ENCODE measurements at regions of chr20 and their contacts with region 1.

Region 1: GRCh38 chr20:49846206-49846807 is 33.7 kb downstream of the SLC9A8 start:
- DNase-seq: peak; percentile 76
- ATAC-seq: peak; percentile 85
- H3K4me3 Mint-ChIP-seq: no peak overlapping the region
- H3K27ac Mint-ChIP-seq: no peak overlapping the region
- H3K4me1 Mint-ChIP-seq: peaks cover 9% of the 10 kb centered on the region
- H3K27me3 Mint-ChIP-seq: no peaks in the 10 kb centered on the region

Region 2: DNA sequence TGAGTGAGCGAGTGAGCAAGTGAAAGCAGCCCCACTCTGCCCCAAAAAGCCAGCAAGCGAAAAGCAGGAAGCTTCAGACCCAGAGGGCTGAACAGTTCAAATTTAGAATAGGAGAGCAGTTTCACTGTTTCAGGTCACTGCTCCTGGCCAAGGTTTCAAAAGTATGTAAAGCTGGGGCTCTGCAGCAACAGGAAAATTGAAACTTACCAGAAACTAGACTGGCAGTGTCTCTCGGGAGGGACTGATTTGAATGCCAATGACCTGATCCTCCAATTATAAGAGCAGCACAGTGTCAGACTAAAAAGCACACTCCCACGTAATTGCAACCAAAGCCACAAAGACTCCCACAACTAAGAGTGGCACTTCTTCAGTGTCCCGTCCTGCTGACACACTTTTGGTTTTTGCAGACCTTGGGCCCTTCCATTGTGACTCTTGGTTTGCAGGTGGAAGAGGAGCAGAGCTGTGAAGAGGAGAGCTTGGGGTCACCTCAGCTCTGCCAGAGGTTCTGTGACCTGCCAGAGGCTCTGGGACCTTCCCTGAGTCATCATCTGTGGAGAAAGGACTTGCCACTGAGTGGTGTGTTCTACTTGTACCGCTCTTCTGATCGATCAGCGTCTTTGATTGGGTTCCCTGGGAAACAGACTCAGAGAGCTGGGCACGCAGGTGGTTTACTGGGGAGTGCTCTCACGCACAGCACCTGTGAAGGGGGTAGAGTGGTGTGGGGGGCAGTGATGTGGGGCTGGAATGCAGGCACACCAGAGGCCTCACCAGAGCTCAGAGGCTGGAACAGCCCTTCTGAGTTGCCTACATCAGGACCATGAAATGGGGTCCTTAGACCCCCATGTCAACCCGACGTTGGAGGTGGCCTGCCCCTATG is 225.7 kb before region 1 on chr20:
- CTCF ChIA-PET with region 1: interaction called, 155 read pairs
- POLR2A ChIA-PET with region 1: no interaction called
- DNase-seq: peak; percentile 43
- ATAC-seq: peak; percentile 81
- H3K4me3 Mint-ChIP-seq: no peak overlapping the region
- H3K27ac Mint-ChIP-seq: peak overlapping the region; percentile 18
- H3K4me1 Mint-ChIP-seq: peaks cover 3% of the 10 kb centered on the region
- H3K27me3 Mint-ChIP-seq: peaks cover 6% of the 10 kb centered on the region

Region 3: GRCh38 chr20:49668181-49668877 is 178.0 kb before region 1 on chr20:
- CTCF ChIA-PET with region 1: interaction called, 25 read pairs
- POLR2A ChIA-PET with region 1: no interaction called
- DNase-seq: peak; percentile 59
- ATAC-seq: peak; percentile 27
- H3K4me3 Mint-ChIP-seq: peak overlapping the region; percentile 57
- H3K27ac Mint-ChIP-seq: peak overlapping the region; percentile 80
- H3K4me1 Mint-ChIP-seq: peaks cover 46% of the 10 kb centered on the region
- H3K27me3 Mint-ChIP-seq: peaks cover 4% of the 10 kb centered on the region

Region 4: DNA sequence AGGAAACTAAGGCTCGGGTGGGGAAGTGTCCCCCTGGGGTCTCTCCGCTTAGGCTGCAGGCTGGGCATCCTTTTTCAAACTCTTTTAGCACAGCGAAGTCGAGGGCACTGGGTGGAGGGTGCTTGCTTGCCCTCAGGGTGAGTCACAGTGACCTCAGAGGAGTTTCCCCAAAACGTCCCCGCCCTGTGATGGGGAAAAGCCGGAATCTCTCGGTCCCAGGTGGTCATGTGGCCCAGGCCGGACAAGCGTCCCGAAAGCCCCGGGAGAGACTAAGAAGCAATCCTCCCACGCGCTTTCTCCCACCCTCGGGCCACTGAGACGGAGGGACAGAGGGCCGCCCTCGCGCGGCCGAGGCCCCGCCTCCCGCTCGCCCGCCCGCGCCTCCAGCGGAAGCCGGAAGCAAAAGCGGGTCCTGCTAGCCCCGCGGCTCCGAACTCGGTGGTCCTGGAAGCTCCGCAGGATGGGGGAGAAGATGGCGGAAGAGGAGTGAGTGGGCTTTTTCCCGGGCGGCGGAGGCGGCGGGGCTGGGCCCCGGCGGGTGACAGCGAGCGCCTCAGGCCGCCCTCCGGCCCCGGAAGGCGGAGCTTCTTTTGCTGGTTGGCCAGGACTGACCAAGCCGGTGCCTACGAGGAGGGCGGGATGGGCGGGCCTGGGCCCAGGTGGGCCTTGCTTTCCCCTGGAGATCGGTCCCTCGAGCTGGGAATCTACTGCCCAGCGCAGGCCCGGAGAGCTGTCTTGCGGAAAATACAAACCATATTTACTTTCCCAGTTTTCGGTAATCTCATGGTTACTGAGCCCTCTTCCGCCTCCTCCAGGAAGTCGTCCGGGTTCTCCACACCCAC is 33.6 kb before region 1 on chr20 and contains the start of gene SLC9A8:
- CTCF ChIA-PET with region 1: interaction called, 13 read pairs
- POLR2A ChIA-PET with region 1: interaction called, 3 read pairs
- DNase-seq: peak; percentile 87
- ATAC-seq: peak; percentile 95
- H3K4me3 Mint-ChIP-seq: peak within 1 kb of the TSS; percentile 97
- H3K27ac Mint-ChIP-seq: peak within 1 kb of the TSS; percentile 95
- H3K4me1 Mint-ChIP-seq: peaks cover 34% of the 10 kb centered on the region
- H3K27me3 Mint-ChIP-seq: no peaks in the 10 kb centered on the region
- total RNA-seq, gene SLC9A8: 19.4 to 20.5 TPM

Region 5: GRCh38 chr20:49896204-49896979 is 50.1 kb after region 1 on chr20:
- CTCF ChIA-PET with region 1: no interaction called
- POLR2A ChIA-PET with region 1: no interaction called
- DNase-seq: no peak
- ATAC-seq: no peak
- H3K4me3 Mint-ChIP-seq: no peak overlapping the region
- H3K27ac Mint-ChIP-seq: no peak overlapping the region
- H3K4me1 Mint-ChIP-seq: peaks cover 22% of the 10 kb centered on the region
- H3K27me3 Mint-ChIP-seq: no peaks in the 10 kb centered on the region

Region 6: GRCh38 chr20:49989234-49990065 is 143.1 kb after region 1 on chr20:
- CTCF ChIA-PET with region 1: no interaction called
- POLR2A ChIA-PET with region 1: no interaction called
- DNase-seq: no peak
- ATAC-seq: no peak
- H3K4me3 Mint-ChIP-seq: no peak overlapping the region
- H3K27ac Mint-ChIP-seq: no peak overlapping the region
- H3K4me1 Mint-ChIP-seq: peaks cover 12% of the 10 kb centered on the region
- H3K27me3 Mint-ChIP-seq: peaks cover 4% of the 10 kb centered on the region

Measured in activated CD8-positive, alpha-beta T cell treated with anti-CD3 and anti-CD28 coated beads, Interleukin-2, amount 10 ng/mL, durations not matched to agents 7 days and 5 days (primary cell).